Activated T-helper 2 cell treated with anti-CD3 and anti-CD28 coated beads, Interferon-gamma antibody, Interleukin-2, Interleukin-4, amounts not matched to agents 10 μg/mL and 5 μg/mL and 100 μg/mL, durations not matched to agents 14 hours and 24 hours and 36 hours (primary cell): ENCODE measurements at regions of chr9 and their contacts with region 1.

Region 1: DNA sequence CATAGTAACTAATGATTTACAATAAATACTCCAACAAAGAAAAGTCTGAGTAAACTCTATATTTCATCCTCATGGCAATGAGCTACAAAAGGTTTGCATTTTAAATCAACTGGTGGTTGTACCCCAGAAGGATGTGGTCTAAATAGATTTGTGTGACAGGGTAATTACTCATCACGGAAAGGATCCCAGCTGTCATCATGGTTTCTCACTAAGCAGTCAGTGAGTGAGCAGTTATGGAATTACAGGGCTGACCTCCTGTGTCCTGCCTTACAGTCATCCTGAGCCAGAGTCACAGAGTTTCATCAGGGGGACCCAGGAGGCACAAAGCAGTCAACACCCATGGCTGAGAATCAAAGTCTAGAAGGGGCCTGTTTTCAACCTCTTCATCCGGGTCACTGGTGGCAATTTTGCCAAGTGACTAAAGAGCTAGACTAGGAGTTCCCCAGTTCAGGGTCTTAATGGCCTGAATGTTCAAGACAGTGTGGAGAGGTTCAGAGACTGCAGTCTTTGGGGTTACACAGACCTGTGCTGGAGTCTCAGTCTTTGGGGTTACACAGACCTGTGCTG is 210.7 kb upstream of the SLC24A2 start:
- DNase-seq: peak; percentile 55
- H3K4me3 Mint-ChIP-seq: no peak overlapping the region
- H3K27ac Mint-ChIP-seq: peak overlapping the region; percentile 91
- H3K4me1 Mint-ChIP-seq: peaks cover 51% of the 10 kb centered on the region
- H3K27me3 Mint-ChIP-seq: no peaks in the 10 kb centered on the region

Region 2: DNA sequence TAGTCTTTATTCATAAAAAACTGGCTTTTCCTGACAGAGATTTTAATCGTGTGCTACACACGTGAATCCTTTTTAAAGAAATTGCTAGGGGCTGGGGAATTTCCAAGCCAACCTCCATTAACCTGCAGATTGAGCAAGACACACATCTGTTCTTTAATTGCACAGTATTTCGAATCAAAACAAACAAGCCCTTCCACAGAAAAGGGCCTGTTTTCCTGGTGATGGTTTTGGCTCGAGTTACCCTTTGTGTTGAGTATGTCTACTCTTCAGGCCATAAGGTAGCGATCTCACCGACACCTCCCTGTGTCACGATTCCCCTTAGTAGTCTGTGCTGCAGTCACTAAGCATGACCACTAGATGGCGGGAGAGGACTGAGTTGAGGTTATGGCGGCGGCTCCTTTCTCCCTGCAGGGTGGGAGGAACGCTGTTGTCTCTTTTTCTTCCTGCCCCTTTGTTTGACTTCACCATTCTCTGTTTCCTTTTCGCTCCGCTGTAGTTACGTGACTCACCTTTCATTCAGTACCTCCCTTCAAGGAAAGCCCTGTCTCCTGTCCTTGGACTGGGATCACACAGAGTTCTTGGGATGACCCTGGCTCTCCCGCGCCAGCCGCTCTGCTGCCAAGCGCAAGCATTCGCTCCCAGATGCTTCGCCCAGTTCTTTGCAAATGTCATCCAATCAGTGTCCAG is 73.6 kb before region 1 on chr9:
- intact Hi-C with region 1: loop called (anchors 5 kb)
- DNase-seq: peak; percentile 74
- H3K4me3 Mint-ChIP-seq: peak overlapping the region; percentile 64
- H3K27ac Mint-ChIP-seq: no peak overlapping the region
- H3K4me1 Mint-ChIP-seq: peaks cover 14% of the 10 kb centered on the region
- H3K27me3 Mint-ChIP-seq: peaks cover 24% of the 10 kb centered on the region

Region 3: DNA sequence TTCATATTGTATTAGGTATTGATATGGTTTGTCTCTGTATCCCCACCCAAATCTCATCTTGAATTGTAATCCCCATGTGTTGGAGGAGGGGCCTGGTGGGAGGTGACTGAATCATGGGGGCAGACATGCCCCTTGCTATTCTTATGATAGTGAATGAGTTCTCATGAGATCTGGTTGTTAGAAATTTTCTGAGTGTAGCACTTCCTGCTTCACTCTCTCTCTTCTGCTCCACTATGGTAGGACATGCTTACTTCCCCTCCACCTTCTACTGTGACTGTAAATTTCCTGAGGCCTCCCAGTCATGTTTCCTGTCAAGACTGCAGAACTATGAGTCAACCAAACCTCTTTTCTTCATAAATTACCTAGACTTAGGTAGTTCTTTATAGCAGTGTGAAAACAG is 23.3 kb before region 1 on chr9:
- intact Hi-C with region 1: loop called (anchors 1 kb)
- DNase-seq: no peak
- H3K4me3 Mint-ChIP-seq: no peak overlapping the region
- H3K27ac Mint-ChIP-seq: peak overlapping the region; percentile 83
- H3K4me1 Mint-ChIP-seq: peaks cover 28% of the 10 kb centered on the region
- H3K27me3 Mint-ChIP-seq: no peaks in the 10 kb centered on the region

Region 4: GRCh38 chr9:20558566-20559016 is 559.0 kb after region 1 on chr9:
- intact Hi-C with region 1: loop called (anchors 1 kb)
- DNase-seq: no peak
- H3K4me3 Mint-ChIP-seq: no peak overlapping the region
- H3K27ac Mint-ChIP-seq: peak overlapping the region; percentile 54
- H3K4me1 Mint-ChIP-seq: peaks cover 72% of the 10 kb centered on the region
- H3K27me3 Mint-ChIP-seq: no peaks in the 10 kb centered on the region

Region 5: DNA sequence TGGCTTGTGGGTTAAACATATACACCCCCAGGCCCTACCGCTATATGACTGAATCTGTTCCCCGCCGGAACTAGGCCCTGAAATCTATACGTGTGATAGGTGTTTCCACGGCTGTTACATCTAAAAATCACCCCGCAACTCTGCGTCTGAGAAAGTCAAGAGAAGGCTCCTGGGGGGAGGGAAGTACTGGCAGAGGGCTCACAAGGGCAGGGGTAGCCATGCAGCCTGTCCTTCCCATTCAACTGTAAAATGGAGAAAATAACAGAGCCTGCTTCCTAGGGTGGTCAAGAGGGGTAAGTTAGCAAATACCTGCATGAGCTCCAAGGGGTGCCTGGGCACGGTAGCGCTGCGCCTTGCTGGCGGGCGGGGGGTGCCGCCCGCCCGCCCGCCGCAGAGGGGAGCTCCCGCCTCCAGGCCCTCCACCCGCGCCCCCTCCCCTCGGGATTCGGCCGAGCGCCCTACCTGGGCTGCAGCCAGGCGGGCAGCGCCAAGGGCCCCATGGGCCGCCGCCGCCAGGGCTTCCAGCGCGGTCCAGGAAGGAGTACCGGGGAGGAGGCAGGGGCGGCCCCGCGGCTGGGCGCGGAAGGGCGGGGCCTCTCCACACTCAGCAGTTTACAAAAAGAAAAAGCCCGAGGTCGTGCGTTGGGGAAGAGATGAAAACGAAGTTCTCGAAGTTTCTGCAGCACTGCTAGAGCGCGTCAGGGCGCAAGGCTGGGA is 1031.7 kb after region 1 on chr9 and contains the start of gene HACD4:
- intact Hi-C with region 1: loop called (anchors 5 kb)
- DNase-seq: peak; percentile 69
- H3K4me3 Mint-ChIP-seq: peak within 1 kb of the TSS; percentile 67
- H3K27ac Mint-ChIP-seq: peak within 1 kb of the TSS; percentile 56
- H3K4me1 Mint-ChIP-seq: peaks cover 20% of the 10 kb centered on the region
- H3K27me3 Mint-ChIP-seq: peaks cover 3% of the 10 kb centered on the region
- total RNA-seq, gene HACD4: 2.2 and 2.4 TPM in 2 replicates